GM12878 (cell line): ENCODE measurements at regions of chr7 and their contacts with region 1.

Region 1: GRCh38 chr7:17530741-17531417 is 232.4 kb downstream of the AHR start:
- DNase-seq: peak; percentile 19
- ATAC-seq: peak; percentile 93
- H3K4me3 ChIP-seq: no peak overlapping the region
- H3K27ac ChIP-seq: no peak overlapping the region
- H3K4me1 ChIP-seq: no peaks in the 10 kb centered on the region
- H3K27me3 ChIP-seq: no peaks in the 10 kb centered on the region; a peak in 1 of 4 replicates
- CTCF ChIP-seq: peak; percentile 14 to 57 (median 29); a peak in 3 of 6 replicates
- EP300 ChIP-seq: no peak
- POLR2A ChIP-seq: no peak
- RAD21 ChIP-seq: peak; percentile 79

Region 2: DNA sequence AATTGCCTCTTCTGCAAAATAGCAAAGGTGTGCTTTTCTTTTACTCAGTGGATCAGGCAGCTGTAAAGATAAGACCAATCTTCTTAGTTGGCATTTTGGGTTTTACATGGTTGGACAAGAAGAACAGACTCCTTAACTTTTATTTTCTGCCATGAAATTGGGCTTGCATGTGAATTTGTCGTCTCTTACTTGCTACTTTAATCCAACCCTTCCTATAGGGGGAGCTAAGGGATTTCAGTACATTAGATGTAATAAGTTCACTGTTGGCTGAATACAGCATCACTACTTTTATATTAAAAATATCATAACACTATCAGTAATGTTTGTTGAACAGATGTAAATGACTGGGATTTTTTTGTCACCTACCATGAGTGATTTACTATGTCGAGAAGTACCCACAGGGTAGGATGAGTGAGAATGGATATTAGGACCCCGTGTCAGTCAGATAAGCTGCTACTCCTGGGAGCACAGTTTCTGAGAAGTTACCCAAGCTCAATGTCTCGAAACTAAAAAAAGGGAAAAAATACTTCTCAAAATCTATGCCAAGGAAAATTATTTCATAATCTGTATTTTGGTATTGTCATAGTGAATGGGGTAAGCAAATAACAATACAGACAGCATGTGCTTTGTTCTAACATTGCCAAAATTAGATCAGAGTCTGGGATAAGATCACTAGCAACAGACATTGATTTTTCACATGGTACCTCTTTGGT is 521.7 kb before region 1 on chr7:
- CTCF ChIA-PET with region 1: interaction called, 11 read pairs
- POLR2A ChIA-PET with region 1: no interaction called
- RAD21 ChIA-PET with region 1: no interaction called
- SMC1A ChIA-PET with region 1: no interaction called
- in situ Hi-C with region 1: no loop called
- intact Hi-C with region 1: no loop called
- DNase-seq: no peak
- ATAC-seq: peak; percentile 72
- H3K4me3 ChIP-seq: no peak overlapping the region
- H3K27ac ChIP-seq: no peak overlapping the region
- H3K4me1 ChIP-seq: no peaks in the 10 kb centered on the region
- H3K27me3 ChIP-seq: no peaks in the 10 kb centered on the region
- CTCF ChIP-seq: peak; percentile 36 to 56 (median 38); a peak in 5 of 6 replicates
- EP300 ChIP-seq: no peak
- POLR2A ChIP-seq: no peak
- RAD21 ChIP-seq: peak; percentile 71

Region 3: GRCh38 chr7:17882685-17883084 is 351.8 kb after region 1 on chr7:
- CTCF ChIA-PET with region 1: no interaction called
- POLR2A ChIA-PET with region 1: no interaction called
- RAD21 ChIA-PET with region 1: no interaction called
- SMC1A ChIA-PET with region 1: no interaction called
- in situ Hi-C with region 1: no loop called
- intact Hi-C with region 1: no loop called
- DNase-seq: no peak
- ATAC-seq: no peak
- H3K4me3 ChIP-seq: no peak overlapping the region
- H3K27ac ChIP-seq: no peak overlapping the region
- H3K4me1 ChIP-seq: no peaks in the 10 kb centered on the region
- H3K27me3 ChIP-seq: no peaks in the 10 kb centered on the region
- CTCF ChIP-seq: no peak
- EP300 ChIP-seq: no peak
- POLR2A ChIP-seq: no peak
- RAD21 ChIP-seq: no peak